Caco-2 (cell line): ENCODE measurements at regions of chr4 and their contacts with region 1.

Region 1: DNA sequence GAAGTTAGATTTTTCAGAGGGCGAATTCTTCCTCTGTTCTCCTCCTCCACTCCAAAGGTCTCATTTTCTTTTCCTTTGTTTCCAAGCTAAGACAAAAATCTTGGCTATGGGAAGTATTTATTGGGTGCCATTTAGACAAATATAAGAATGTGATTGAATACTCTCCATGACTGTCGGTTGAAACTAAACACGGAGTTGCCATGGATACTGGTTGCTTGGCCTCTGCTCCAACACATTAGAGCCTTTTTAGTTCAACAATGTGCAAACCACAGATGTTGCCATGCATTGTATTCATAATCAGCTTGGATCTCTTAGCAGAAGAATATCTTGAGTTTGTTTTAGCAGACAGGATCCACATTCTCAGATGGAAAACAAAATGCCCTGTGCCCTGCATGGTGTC is 366.5 kb upstream of the LCORL start:
- DNase-seq: peak in 1 of 2 experiments; percentile 39
- H3K4me3 ChIP-seq: no peak overlapping the region
- H3K4me3 Mint-ChIP-seq: peak overlapping the region; percentile 18
- H3K27ac Mint-ChIP-seq: peak overlapping the region; percentile 38
- H3K4me1 ChIP-seq: no peaks in the 10 kb centered on the region; the same call in 1 of the 2 replicates
- H3K4me1 Mint-ChIP-seq: peaks cover 7% of the 10 kb centered on the region
- H3K27me3 ChIP-seq: no peaks in the 10 kb centered on the region
- H3K27me3 Mint-ChIP-seq: no peaks in the 10 kb centered on the region
- CTCF ChIP-seq: no peak

Region 2: DNA sequence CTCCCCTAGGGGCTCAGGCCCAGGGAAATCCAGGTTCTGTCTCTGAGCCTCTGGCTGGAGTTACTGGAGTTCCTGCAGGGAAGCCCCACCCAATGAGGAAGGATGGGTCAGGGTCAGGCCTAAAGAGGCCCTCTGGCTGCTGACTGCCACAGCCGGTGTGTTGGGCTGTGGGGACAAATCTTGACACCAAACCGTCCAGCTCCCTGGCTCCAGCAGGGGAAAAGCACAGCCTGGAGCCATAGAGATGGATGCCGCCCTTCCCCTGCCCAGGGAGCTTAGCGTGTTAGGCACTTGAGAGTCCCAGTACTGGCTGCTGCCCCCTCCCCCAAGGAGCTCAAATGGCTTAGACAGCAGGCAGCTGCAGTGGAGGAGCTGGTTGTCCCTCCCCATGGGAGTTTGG is 45.2 kb before region 1 on chr4:
- CTCF ChIA-PET with region 1: no interaction called
- POLR2A ChIA-PET with region 1: no interaction called
- intact Hi-C with region 1: no loop called
- DNase-seq: no peak
- H3K4me3 ChIP-seq: no peak overlapping the region
- H3K4me3 Mint-ChIP-seq: no peak overlapping the region
- H3K27ac Mint-ChIP-seq: no peak overlapping the region
- H3K4me1 ChIP-seq: no peaks in the 10 kb centered on the region
- H3K4me1 Mint-ChIP-seq: no peaks in the 10 kb centered on the region
- H3K27me3 ChIP-seq: no peaks in the 10 kb centered on the region
- H3K27me3 Mint-ChIP-seq: no peaks in the 10 kb centered on the region
- CTCF ChIP-seq: no peak

Region 3: GRCh38 chr4:18401425-18401824 is 13.4 kb after region 1 on chr4:
- CTCF ChIA-PET with region 1: no interaction called
- POLR2A ChIA-PET with region 1: no interaction called
- intact Hi-C with region 1: loop called (anchors 1 kb)
- DNase-seq: no peak
- H3K4me3 ChIP-seq: no peak overlapping the region
- H3K4me3 Mint-ChIP-seq: no peak overlapping the region
- H3K27ac Mint-ChIP-seq: peak overlapping the region; percentile 42
- H3K4me1 ChIP-seq: no peaks in the 10 kb centered on the region
- H3K4me1 Mint-ChIP-seq: peaks cover 9% of the 10 kb centered on the region
- H3K27me3 ChIP-seq: no peaks in the 10 kb centered on the region
- H3K27me3 Mint-ChIP-seq: no peaks in the 10 kb centered on the region
- CTCF ChIP-seq: no peak